Left ventricle myocardium superior (tissue), 1 donor: ENCODE measurements at regions of chrX and their contacts with region 1.

Region 1: DNA sequence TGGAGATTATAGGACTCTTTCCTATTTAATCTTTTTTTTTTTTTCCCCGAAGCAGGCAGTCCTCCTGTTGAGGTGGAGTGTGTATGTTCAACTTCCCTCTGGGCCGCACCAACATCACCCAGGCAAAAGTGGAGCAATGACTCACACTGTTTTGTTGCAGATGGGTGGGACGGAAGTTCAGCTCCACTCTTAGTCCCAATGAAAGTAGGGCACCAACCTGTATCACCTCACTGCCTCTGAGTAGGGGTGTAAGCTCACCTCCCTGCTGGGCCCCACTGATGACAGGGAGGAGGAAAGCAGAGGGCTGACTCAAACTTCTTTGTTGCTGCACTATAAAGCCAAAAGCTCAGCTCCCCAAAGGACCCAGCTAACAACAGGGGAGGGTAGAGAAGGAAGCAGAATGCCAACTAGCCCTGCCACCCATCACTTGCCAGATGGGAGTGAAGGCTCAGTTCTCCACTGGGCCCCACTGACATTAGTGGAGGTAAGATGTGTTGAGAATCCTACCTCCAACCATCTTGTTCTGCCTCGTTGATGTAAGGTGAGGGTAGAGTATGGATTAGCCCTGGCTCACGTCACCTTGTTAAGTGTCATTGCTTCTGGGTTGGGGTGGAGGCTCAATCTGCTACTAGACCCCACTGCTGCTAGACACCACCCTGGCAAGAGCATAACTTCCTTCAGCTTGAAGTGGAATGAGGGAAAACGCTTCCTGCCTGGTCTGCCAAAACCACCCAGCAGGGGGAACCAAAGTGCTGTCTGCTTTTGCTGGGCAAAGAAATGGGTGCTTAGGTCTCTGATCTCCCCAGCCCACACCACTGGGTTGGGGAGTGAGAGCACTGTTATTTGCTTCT is 14.1 kb downstream of the RPS6KA3 start:
- DNase-seq: peak; percentile 47
- ATAC-seq: peak; percentile 61

Region 2: GRCh38 chrX:20442597-20442996 is 190.0 kb after region 1 on chrX:
- intact Hi-C with region 1: loop called (anchors 5 kb)
- DNase-seq: peak; percentile 86
- ATAC-seq: peak; percentile 86